PC-3 (cell line): ENCODE measurements at regions of chr7 and their contacts with region 1.

Region 1: GRCh38 chr7:18352339-18353255 is 143.0 kb upstream of the HDAC9 start:
- DNase-seq: peak; percentile 83
- ATAC-seq: peak; percentile 86
- H3K4me3 ChIP-seq: peak overlapping the region; percentile 39
- H3K27ac ChIP-seq: peak overlapping the region; percentile 8; the same call in 1 of the 2 replicates
- H3K4me1 ChIP-seq: peaks cover 14% of the 10 kb centered on the region
- H3K27me3 ChIP-seq: no peaks in the 10 kb centered on the region
- CTCF ChIP-seq: peak; percentile 87

Region 2: DNA sequence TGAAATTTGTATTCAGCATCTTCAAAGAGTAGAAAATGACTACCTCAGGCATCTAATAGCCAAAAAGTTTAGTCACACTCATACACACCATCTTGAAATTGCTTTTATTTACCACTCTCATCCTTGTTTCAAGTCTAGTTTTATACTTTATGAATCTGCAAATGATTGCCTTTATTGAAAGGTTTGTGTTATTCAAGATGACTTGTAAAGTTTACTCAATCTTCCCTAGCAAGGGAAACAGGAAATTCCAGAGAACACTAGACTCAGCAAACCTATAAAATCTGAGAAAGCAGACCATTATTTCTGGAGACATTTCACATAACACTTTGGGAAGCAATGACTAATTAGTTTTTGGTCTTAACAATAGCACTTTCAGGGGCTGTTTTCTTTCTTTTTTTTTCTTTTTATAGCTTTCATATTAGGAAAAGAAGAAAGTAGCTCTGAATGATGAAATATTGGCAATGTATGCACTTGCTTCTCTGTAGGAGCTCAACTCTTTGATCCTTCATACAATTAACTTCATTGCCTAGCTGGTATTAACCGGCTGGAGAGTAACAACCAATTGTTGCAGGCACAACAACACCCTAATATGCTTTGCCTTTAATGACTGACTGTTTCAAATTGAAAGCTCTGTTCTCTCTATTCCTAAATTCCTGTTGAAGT is 74.1 kb after region 1 on chr7:
- CTCF ChIA-PET with region 1: no interaction called
- POLR2A ChIA-PET with region 1: no interaction called
- intact Hi-C with region 1: loop called (anchors 2 kb)
- DNase-seq: peak; percentile 86
- ATAC-seq: peak; percentile 84
- H3K4me3 ChIP-seq: no peak overlapping the region
- H3K27ac ChIP-seq: peak overlapping the region; percentile 86
- H3K4me1 ChIP-seq: peaks cover 47% of the 10 kb centered on the region
- H3K27me3 ChIP-seq: no peaks in the 10 kb centered on the region
- CTCF ChIP-seq: no peak

Region 3: DNA sequence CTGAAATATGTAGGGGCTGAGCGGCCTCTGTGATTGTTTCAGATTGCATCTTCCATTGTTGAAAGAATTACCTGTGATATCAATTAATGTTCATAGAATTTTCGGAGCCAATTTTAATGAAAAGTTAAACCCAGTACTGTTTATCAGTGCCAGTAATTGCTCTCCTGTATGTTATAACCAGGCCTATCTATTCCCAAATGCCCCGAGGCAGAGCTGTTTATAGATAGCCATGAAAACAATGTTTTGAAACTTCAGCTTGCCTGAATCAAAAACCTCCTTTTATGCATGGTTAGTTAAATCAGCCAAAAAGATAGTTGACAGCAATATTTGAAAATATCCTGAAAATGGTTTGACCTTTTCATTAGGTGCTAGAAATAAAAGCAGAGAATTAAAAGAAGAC is 92.9 kb after region 1 on chr7:
- CTCF ChIA-PET with region 1: no interaction called
- POLR2A ChIA-PET with region 1: no interaction called
- intact Hi-C with region 1: no loop called
- DNase-seq: no peak
- ATAC-seq: no peak
- H3K4me3 ChIP-seq: no peak overlapping the region
- H3K27ac ChIP-seq: no peak overlapping the region
- H3K4me1 ChIP-seq: no peaks in the 10 kb centered on the region
- H3K27me3 ChIP-seq: no peaks in the 10 kb centered on the region
- CTCF ChIP-seq: no peak

Region 4: DNA sequence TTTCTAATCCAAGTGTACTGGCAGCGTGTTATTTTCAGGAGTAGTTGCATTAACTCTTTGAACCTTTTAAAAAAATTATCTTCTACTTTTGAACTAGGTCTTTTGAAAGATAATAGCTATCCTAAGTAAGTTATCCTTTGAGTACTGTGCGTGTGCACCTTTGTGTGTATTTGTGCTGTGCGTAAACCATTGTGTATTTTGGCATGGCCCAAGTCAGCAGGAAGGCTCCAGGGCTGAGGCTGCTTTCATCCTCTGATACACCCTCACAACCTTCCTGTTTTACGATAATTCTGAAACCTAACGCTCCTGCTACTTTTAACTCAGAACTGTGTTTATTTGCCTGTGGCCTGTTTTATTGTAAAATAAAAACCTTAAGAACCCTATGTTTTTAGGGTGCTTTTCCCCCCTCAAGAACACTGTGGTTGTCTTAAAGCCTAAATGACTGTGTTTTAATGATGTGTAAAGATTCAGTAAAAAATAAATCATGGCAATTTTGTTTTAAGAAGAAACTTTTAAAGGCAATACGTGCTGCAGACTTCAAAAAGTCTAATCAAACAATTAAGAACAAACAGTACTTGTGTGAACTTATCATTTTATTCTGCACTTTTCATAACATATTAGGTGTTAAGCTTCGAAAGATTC is 200.5 kb after region 1 on chr7:
- CTCF ChIA-PET with region 1: interaction called, 3 read pairs
- POLR2A ChIA-PET with region 1: no interaction called
- intact Hi-C with region 1: loop called (anchors 5 kb)
- DNase-seq: peak; percentile 80
- ATAC-seq: peak; percentile 82
- H3K4me3 ChIP-seq: peak overlapping the region; percentile 50
- H3K27ac ChIP-seq: peak overlapping the region; percentile 90
- H3K4me1 ChIP-seq: peaks cover 58% of the 10 kb centered on the region
- H3K27me3 ChIP-seq: no peaks in the 10 kb centered on the region
- CTCF ChIP-seq: no peak

Region 5: DNA sequence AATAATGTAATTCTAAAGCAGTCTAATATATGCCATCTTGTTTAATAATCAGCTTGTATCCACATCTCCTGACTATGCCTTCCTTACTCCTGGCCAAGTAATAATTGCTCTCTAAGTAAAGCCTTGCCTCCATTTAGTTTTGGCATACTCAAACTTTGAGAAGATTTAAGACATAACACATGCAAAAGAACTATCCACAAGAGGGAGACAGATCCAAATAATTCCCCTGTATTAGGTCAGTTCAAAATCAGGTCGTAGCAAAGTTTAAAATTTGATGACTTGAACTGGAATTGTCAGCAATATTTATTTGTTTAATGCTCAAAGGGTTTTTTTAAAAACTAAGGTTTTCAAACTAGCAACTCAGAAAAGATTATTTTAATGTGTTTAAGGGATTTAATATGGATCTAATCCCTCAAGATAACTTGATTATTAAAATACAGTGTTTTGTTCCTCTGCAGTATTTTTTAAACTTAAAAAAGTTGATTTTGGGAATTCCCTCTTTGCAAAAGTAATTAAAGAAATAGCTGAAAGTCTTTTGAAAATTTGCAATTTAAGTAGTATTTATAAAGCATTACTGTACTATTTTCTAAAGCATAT is 238.2 kb after region 1 on chr7:
- CTCF ChIA-PET with region 1: interaction called, 4 read pairs
- POLR2A ChIA-PET with region 1: no interaction called
- intact Hi-C with region 1: loop called (anchors 1 kb)
- DNase-seq: peak; percentile 56
- ATAC-seq: peak; percentile 75
- H3K4me3 ChIP-seq: no peak overlapping the region
- H3K27ac ChIP-seq: no peak overlapping the region
- H3K4me1 ChIP-seq: no peaks in the 10 kb centered on the region
- H3K27me3 ChIP-seq: no peaks in the 10 kb centered on the region
- CTCF ChIP-seq: peak; percentile 76

Region 6: DNA sequence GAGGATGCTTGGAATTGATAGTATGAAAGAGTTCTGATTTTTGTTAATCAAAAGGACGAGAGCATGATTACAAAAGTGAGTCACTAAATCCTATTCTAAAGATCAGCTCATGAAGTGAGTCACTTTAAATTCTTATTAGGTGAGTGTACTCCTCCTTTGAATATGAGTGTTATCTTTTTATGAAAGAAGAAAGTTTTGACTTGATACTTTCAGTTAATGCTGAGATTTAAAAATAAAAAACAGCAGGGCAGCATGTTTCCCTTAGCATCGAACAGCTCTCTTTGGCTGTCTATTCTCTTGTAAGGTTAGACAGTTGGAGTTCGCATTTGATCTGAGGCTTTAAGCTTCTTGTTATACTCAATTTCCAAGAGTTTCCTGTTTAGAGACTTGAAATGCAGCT is 542.9 kb after region 1 on chr7:
- CTCF ChIA-PET with region 1: no interaction called
- POLR2A ChIA-PET with region 1: no interaction called
- intact Hi-C with region 1: loop called (anchors 10 kb)
- DNase-seq: peak; percentile 89
- ATAC-seq: peak; percentile 80
- H3K4me3 ChIP-seq: peak overlapping the region; percentile 64
- H3K27ac ChIP-seq: peak overlapping the region; percentile 84
- H3K4me1 ChIP-seq: peaks cover 54% of the 10 kb centered on the region
- H3K27me3 ChIP-seq: no peaks in the 10 kb centered on the region
- CTCF ChIP-seq: no peak

Region 7: GRCh38 chr7:19094598-19095352 is 742.2 kb after region 1 on chr7:
- CTCF ChIA-PET with region 1: no interaction called
- POLR2A ChIA-PET with region 1: no interaction called
- intact Hi-C with region 1: loop called (anchors 5 kb)
- DNase-seq: no peak
- ATAC-seq: no peak
- H3K4me3 ChIP-seq: no peak overlapping the region
- H3K27ac ChIP-seq: no peak overlapping the region
- H3K4me1 ChIP-seq: peaks cover under 1% of the 10 kb centered on the region; the same call in 1 of the 2 replicates
- H3K27me3 ChIP-seq: no peaks in the 10 kb centered on the region
- CTCF ChIP-seq: no peak

Region 8: DNA sequence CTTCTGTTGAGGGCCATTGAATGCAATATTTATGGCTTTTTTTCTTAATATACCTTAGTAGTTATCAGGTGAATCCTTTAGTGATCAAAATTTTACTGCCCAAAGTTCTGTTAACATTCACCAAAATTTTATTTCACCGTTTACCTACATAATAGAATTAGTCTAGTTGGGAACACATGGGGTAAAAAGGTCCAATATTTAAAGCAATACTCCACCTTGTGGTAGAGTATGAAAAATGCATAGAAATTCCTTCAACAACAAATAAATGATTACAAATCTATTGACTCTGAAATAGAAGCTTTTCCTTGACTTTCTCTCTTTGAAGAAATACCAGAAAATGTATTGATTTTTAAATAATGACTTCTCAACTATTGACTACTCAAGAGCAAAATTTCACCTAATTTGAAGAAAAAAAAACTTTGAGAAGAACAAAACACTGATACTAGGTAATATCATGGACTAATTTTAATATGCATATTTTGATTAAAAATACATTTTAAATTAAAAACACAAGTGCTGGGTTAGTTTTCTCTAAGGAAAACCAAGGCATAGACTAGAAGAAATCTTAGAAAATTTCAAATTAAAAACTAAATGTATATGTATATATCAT is 1312.9 kb after region 1 on chr7:
- CTCF ChIA-PET with region 1: no interaction called
- POLR2A ChIA-PET with region 1: no interaction called
- intact Hi-C with region 1: loop called (anchors 10 kb)
- DNase-seq: peak; percentile 50
- ATAC-seq: peak; percentile 51; the same call in 1 of the 2 replicates
- H3K4me3 ChIP-seq: no peak overlapping the region
- H3K27ac ChIP-seq: no peak overlapping the region
- H3K4me1 ChIP-seq: peaks cover 12% of the 10 kb centered on the region
- H3K27me3 ChIP-seq: peaks cover 7% of the 10 kb centered on the region; the same call in 1 of the 2 replicates
- CTCF ChIP-seq: peak; percentile 77